Colonic mucosa (tissue), 4 donors: ENCODE measurements at regions of chr20 and their contacts with region 1.

Region 1: GRCh38 chr20:13546497-13547131 is 92.1 kb downstream of the TASP1 start:
- DNase-seq: peak; percentile 86
- H3K4me3 ChIP-seq: no peak overlapping the region
- H3K27ac ChIP-seq: no peak overlapping the region
- H3K4me1 ChIP-seq: no peaks in the 10 kb centered on the region
- H3K27me3 ChIP-seq: no peaks in the 10 kb centered on the region
- CTCF ChIP-seq: peak; percentile 76

Region 2: DNA sequence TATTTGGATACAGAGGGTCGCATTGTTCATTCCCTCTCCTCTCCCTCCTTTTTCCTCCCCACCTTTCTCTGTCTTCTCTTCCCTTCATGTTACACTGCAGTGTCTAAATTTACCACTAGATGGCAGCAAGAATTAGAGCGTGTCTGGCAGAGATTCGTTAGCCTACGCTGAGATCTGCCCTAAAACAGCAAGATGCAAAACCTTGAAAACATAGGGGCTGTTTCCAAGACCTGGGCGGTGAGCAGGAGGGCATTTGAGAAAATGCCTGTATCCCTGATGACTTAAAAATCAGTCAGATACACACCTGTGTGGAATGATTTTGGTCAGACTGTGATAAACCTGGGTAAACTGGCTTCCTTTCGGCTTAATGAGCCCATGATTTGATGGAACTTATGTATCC is 427.0 kb before region 1 on chr20:
- intact Hi-C with region 1: loop called (anchors 10 kb)
- DNase-seq: peak; percentile 47
- H3K4me3 ChIP-seq: no peak overlapping the region
- H3K27ac ChIP-seq: no peak overlapping the region
- H3K4me1 ChIP-seq: no peaks in the 10 kb centered on the region
- H3K27me3 ChIP-seq: no peaks in the 10 kb centered on the region
- CTCF ChIP-seq: peak; percentile 73

Region 3: DNA sequence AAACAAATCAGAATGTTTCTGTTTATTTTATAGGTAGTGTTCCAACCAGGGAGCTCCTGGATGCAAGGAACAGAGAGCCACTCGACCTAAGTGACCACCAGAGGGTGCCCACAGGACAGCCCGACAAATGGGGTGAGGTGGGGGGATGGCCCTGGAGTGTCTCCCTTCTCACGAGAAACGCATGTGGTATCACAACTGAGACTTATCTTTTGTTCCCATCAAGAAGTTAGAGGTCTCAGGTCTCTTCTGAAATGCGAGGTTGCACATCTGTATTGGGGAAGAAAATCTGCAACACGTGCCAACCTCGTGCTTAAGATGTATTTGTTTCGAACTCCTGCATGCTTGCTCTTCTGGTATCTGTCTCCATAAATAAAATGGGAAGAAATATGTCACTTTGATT is 221.6 kb before region 1 on chr20:
- intact Hi-C with region 1: loop called (anchors 2 kb)
- DNase-seq: no peak
- H3K4me3 ChIP-seq: no peak overlapping the region
- H3K27ac ChIP-seq: no peak overlapping the region
- H3K4me1 ChIP-seq: no peaks in the 10 kb centered on the region
- H3K27me3 ChIP-seq: no peaks in the 10 kb centered on the region
- CTCF ChIP-seq: no peak

Region 4: DNA sequence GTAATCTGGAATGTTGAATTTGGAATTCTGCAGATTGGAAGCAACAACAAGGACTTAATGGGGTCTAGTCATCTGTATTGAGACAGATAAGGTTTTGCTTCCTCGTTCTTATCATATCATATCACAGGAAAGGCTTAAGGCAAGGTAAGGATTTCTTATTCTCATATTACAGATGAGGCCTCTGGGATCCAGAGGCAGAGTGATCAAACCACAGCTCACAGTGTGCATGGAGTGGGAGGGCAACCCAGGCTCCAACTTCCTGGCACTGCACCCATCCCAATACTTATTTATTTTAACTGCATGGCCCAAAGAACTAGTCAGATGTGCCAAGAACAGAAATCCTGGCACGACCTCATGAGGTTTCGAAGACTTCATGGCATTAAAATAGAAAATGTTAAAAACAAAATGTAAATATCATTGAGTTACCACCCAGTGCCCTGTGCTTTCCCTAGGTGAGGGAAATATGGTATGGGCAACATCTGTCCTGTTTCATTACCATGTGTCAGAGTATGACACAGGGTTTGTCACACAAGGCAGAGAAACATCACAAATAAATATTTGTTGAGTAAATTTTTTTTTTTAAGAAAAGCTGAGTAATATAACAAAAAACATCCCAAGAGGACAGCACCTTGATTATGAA is 133.7 kb before region 1 on chr20:
- intact Hi-C with region 1: no loop called
- DNase-seq: no peak
- H3K4me3 ChIP-seq: no peak overlapping the region
- H3K27ac ChIP-seq: no peak overlapping the region
- H3K4me1 ChIP-seq: no peaks in the 10 kb centered on the region
- H3K27me3 ChIP-seq: no peaks in the 10 kb centered on the region
- CTCF ChIP-seq: no peak

Region 5: DNA sequence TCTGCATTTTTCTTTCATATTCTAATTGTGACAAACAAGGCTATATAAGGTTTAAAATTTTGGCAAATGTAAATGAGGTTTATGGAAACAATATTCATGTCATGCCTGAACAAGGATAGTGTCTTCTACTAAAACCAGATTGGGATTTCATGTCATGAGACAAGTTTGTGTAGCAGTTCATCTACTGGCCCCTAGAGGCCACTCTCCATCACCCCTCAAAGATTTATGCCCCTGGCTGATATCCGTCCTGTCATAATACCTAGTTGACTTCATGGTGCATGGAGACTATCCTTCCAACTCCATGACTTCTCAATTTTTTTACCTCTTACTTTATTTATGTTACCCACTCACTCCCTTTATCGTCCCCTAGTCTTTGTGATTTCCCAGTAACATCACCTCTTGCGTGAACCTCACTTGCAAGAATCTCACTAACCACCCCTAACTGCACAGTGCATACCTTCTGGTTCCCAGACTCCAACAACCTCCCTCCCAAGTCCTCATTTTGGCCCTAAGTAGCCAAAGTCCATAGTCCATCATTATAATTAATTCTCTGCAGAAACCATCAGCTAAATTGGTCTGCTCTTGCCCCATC is 87.7 kb before region 1 on chr20:
- intact Hi-C with region 1: loop called (anchors 5 kb)
- DNase-seq: peak; percentile 22
- H3K4me3 ChIP-seq: no peak overlapping the region
- H3K27ac ChIP-seq: no peak overlapping the region
- H3K4me1 ChIP-seq: no peaks in the 10 kb centered on the region
- H3K27me3 ChIP-seq: no peaks in the 10 kb centered on the region
- CTCF ChIP-seq: peak; percentile 67

Region 6: DNA sequence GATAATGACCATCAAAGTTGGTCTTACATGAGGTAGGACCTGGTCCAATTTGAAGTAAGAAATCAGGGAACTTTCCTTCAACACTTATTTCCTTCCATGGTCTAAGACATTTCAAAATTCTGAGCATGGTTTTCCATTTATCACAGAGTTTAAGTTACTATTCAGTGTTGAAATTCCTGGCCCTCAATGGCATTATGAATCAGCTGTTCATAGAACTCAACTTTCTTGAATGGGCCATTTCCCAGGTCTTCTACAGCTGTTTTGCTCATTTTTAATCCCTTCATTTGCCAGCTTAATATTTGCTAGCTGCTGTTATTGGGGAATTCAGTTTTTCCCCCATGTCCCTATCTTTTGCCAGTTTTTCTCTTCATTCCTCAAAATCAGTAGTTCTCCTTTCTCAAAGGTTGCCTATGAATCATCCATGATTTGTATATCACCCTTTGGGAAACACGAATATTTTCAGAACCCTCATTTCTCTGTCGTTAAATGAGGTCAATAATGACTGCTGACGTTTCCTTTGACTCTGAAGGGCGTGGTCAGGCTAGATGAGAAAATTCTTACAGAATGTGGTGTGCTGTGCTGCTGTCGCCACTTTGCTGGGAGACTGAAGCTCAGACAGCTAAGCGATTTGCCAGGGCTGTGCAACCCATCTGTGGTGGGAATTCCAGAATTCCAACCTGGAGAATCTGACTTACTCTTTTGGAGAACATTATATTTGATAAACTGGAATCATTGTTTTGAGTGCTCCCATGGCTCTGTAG is 1007.3 kb after region 1 on chr20:
- intact Hi-C with region 1: no loop called
- DNase-seq: no peak
- H3K4me3 ChIP-seq: no peak overlapping the region
- H3K27ac ChIP-seq: no peak overlapping the region
- H3K4me1 ChIP-seq: no peaks in the 10 kb centered on the region
- H3K27me3 ChIP-seq: no peaks in the 10 kb centered on the region
- CTCF ChIP-seq: no peak